Heart left ventricle (tissue), 16 donors: ENCODE measurements at regions of chr4 and their contacts with region 1.

Region 1: DNA sequence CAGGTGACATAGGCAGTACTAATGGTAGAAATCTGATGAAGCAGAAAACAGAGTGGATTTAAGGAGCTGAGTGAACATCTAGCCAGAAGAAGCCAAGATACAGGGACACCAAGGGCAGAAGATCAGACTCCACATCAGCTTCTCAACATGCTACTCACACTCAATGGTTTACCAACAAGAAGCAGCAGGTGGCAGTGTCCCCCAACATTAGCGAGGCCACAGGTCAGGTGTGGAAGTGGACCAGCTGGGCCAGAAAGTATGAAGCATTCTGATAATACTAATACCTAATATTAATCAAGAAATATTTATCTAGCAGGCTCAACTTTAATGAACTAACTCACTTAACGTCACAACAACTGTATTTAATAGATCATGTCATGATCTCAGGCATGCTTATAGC is 73.4 kb upstream of the TTC29 start:
- DNase-seq: peak; percentile 38 to 70 (median 55)
- ATAC-seq: peak; percentile 71 to 85 (median 80)
- H3K4me3 ChIP-seq: no peak overlapping the region
- H3K27ac ChIP-seq: no peak overlapping the region
- H3K4me1 ChIP-seq: no peaks in the 10 kb centered on the region
- H3K27me3 ChIP-seq: no peaks in the 10 kb centered on the region
- CTCF ChIP-seq: peak; percentile 49 to 79 (median 68)
- POLR2A ChIP-seq: no peak

Region 2: DNA sequence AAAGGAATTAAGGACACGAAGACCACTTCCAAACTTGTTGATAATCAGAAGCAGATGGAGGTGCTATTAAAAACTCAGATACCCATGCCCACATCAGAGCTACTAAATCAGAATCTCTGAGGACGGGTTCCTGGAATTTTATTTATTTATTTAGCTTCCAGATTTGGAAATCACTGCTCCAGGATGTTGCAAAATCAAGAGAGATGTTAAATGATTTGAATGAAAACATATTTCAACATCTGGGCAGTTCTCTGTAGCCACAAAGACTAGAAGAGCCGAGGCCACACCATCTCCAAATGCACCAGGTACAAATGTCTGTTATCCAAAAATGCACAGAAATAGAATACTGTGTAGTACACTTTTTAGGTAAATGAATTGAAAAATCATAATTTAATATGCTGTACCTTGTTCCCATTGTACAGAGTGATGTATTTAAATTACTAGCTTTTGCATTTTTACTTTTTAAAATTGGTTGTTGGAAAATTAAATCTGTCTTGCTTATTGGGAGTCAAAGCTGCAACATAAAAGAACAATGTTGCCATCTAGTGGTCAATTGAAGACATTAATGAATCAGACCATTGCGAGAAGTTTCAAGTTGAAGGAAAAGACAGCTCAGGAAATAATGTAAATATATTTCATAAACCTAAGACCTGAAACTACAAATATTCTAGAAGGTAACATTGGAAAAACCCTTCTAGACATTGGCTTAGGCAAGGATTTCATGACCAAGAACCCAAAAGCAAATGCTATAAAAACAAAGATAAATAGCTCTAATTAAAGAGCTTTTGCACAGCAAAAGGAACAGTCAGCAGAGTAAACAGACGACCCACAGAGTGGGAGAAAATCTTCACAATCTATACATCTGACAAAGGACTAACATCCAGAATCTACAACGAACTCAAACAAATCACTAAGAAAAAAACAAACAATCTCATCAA is 77.9 kb after region 1 on chr4:
- intact Hi-C with region 1: loop called (anchors 1 to 5 kb)
- DNase-seq: no peak
- ATAC-seq: peak in 1 of 4 donors; percentile 49
- H3K4me3 ChIP-seq: no peak overlapping the region
- H3K27ac ChIP-seq: no peak overlapping the region
- H3K4me1 ChIP-seq: no peaks in the 10 kb centered on the region
- H3K27me3 ChIP-seq: no peaks in the 10 kb centered on the region
- CTCF ChIP-seq: peak; percentile 49 to 79 (median 68)
- POLR2A ChIP-seq: no peak

Region 3: DNA sequence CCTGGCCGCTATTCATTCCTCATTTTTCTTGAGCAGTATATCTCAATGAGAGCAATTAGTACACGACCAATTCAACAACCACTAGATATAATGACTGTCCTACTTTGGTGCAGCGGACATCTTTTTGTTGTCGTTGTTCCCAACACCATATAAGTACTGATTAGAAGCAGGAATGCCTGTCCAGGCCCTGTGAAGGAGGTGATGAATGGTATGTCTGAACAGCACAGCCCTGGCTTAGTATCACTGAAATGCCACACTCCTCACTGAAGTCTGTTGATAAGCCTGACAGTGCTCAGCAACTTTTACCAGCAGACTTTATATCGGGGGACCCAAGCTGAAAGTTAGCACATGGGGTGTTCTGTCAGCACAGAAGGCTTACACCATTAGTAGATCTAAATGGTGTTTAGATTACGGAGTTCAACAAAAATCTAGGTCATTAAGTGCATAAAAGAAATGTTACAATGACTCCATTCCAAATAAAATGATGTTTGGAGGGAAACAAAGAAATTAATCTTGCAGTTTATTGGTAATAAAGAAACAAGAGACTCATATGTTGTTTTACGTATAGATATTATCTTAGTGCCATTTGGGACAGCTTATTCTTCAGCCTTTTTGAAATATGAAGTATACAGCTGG is 154.9 kb after region 1 on chr4:
- intact Hi-C with region 1: no loop called
- DNase-seq: peak in 4 of 5 donors; percentile 41 to 62 (median 52)
- ATAC-seq: peak; percentile 99 to 100 (median 100)
- H3K4me3 ChIP-seq: no peak overlapping the region
- H3K27ac ChIP-seq: peak overlapping the region in 6 of 12 donors; percentile 20 to 59 (median 46)
- H3K4me1 ChIP-seq: peaks cover 0 to 16% (median 2%) of the 10 kb centered on the region in 12 donors
- H3K27me3 ChIP-seq: no peaks in the 10 kb centered on the region
- CTCF ChIP-seq: no peak
- POLR2A ChIP-seq: no peak

Region 4: DNA sequence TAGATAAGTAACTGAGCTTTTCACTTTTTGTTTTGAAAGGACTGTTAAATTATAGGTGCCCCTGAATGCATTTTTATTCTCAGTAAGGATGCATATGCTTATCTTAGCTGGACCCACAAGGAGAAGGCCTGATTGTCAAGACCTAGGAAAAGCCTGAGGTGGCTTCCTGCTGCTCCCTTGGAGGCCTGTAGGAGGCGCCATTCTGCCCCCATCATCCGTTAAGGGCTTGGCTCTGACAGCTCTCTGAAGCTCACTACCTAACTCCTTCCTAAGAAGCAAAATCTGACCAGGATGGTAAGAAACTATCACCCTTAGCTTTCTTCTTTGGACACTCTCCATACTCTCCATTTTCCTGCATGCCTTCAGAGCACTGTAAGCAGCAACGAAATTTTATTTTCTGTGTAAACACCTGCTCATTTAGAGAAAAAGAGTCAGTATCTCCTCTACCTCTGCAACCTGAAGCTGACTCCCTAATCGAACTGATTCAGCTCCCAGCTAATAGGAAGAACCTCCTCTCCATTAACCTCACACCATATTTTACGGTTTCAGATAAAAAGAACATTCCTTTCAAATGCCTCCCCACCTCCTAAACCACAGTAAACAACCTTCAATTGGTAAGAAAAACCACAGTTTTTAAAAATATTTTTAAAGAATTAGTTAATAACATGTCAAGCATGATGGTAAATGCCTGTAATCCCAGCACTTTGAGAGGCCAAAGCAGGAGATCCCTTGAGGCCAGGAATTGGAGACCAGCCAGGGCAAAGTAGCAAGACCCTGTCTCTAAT is 388.4 kb after region 1 on chr4:
- intact Hi-C with region 1: no loop called
- DNase-seq: peak in 4 of 5 donors; percentile 23 to 71 (median 32)
- ATAC-seq: peak in 1 of 4 donors; percentile 12
- H3K4me3 ChIP-seq: no peak overlapping the region
- H3K27ac ChIP-seq: peak overlapping the region in 5 of 12 donors; percentile 2 to 39 (median 25)
- H3K4me1 ChIP-seq: peaks cover 0 to 13% (median 0%) of the 10 kb centered on the region in 12 donors
- H3K27me3 ChIP-seq: no peaks in the 10 kb centered on the region
- CTCF ChIP-seq: peak in 6 of 12 donors; percentile 6 to 23 (median 14)
- POLR2A ChIP-seq: no peak

Region 5: GRCh38 chr4:147596981-147597380 is 577.9 kb after region 1 on chr4:
- intact Hi-C with region 1: loop called in 7 of 10 experiments (anchors 5 to 10 kb)
- DNase-seq: no peak
- ATAC-seq: no peak
- H3K4me3 ChIP-seq: no peak overlapping the region
- H3K27ac ChIP-seq: no peak overlapping the region
- H3K4me1 ChIP-seq: no peaks in the 10 kb centered on the region
- H3K27me3 ChIP-seq: no peaks in the 10 kb centered on the region
- CTCF ChIP-seq: no peak
- POLR2A ChIP-seq: no peak